ENCODE measurements at regions of chr9 and their contacts with region 1.

Region 1: DNA sequence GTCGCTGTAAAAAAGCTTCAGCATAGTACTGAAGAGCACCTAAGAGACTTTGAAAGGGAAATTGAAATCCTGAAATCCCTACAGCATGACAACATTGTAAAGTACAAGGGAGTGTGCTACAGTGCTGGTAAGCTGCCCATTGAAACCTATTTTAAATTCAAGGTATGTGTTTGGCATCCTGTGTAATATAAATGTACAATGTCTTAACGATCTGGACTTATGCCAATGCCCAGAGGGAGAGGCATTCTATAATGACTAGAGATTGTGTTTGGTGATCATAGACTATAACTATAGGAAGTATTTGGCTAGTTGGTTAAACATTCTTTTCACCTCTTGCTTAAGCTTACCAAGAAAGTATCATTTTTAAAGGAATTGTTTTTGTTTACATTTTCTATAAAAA is 95.7 kb downstream of the INSL6 start:
- DNase-seq: no peak
- ATAC-seq: no peak
- H3K4me3 ChIP-seq: no peak overlapping the region
- H3K4me3 Mint-ChIP-seq: no peak overlapping the region
- H3K27ac ChIP-seq: no peak overlapping the region
- H3K27ac Mint-ChIP-seq: no peak overlapping the region
- H3K4me1 ChIP-seq: no peaks in the 10 kb centered on the region
- H3K4me1 Mint-ChIP-seq: no peaks in the 10 kb centered on the region
- H3K27me3 ChIP-seq: no peaks in the 10 kb centered on the region
- H3K27me3 Mint-ChIP-seq: no peaks in the 10 kb centered on the region

Region 2: DNA sequence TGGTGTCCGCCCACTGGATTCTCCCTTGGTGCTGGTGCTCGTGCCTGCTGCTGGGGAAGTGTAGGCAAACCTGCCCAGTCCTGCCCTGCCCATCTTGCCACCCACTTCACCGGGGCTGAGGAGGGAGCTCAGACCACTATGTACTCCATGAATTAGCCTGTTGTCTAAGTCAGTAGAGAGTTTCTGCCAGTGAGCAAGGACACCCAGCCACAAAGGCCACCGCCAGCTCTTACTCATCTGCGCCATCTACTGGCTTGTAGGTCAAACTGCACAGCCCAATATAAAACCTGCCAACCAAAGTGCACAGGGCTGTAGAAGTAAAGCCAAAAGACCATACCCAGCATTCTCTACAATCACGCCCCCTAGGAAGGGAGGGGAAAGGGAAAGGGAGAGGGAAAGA is 892.2 kb before region 1 on chr9:
- CTCF ChIA-PET with region 1: no interaction called
- POLR2A ChIA-PET with region 1: no interaction called
- intact Hi-C with region 1: no loop called
- DNase-seq: no peak
- ATAC-seq: no peak
- H3K4me3 ChIP-seq: no peak overlapping the region
- H3K4me3 Mint-ChIP-seq: no peak overlapping the region
- H3K27ac ChIP-seq: no peak overlapping the region
- H3K27ac Mint-ChIP-seq: peak overlapping the region in 1 of 9 donors; percentile 20
- H3K4me1 ChIP-seq: no peaks in the 10 kb centered on the region
- H3K4me1 Mint-ChIP-seq: no peaks in the 10 kb centered on the region
- H3K27me3 ChIP-seq: no peaks in the 10 kb centered on the region
- H3K27me3 Mint-ChIP-seq: peaks cover 0 to 18% (median 0%) of the 10 kb centered on the region in 5 donors

Region 3: GRCh38 chr9:4781408-4781807 is 308.3 kb before region 1 on chr9:
- CTCF ChIA-PET with region 1: no interaction called
- POLR2A ChIA-PET with region 1: no interaction called
- intact Hi-C with region 1: no loop called
- DNase-seq: no peak
- ATAC-seq: no peak
- H3K4me3 ChIP-seq: no peak overlapping the region
- H3K4me3 Mint-ChIP-seq: no peak overlapping the region
- H3K27ac ChIP-seq: no peak overlapping the region
- H3K27ac Mint-ChIP-seq: peak overlapping the region in 1 of 9 donors; percentile 41
- H3K4me1 ChIP-seq: no peaks in the 10 kb centered on the region
- H3K4me1 Mint-ChIP-seq: no peaks in the 10 kb centered on the region
- H3K27me3 ChIP-seq: peaks cover 0 to under 1% of the 10 kb centered on the region in 2 donors
- H3K27me3 Mint-ChIP-seq: peaks cover 6 to 14% (median 13%) of the 10 kb centered on the region in 5 donors

Region 4: GRCh38 chr9:5042641-5043277 is 47.0 kb before region 1 on chr9:
- CTCF ChIA-PET with region 1: no interaction called
- POLR2A ChIA-PET with region 1: no interaction called
- intact Hi-C with region 1: loop called in 1 of 2 experiments (anchors 5 kb)
- DNase-seq: peak in 1 of 9 donors; percentile 15
- ATAC-seq: no peak
- H3K4me3 ChIP-seq: no peak overlapping the region
- H3K4me3 Mint-ChIP-seq: peak overlapping the region in 4 of 10 donors; percentile 56 to 76 (median 60)
- H3K27ac ChIP-seq: no peak overlapping the region
- H3K27ac Mint-ChIP-seq: peak overlapping the region in 2 of 9 donors; percentile 46 to 74
- H3K4me1 ChIP-seq: no peaks in the 10 kb centered on the region
- H3K4me1 Mint-ChIP-seq: peaks cover 0 to 18% (median 0%) of the 10 kb centered on the region in 7 donors
- H3K27me3 ChIP-seq: no peaks in the 10 kb centered on the region
- H3K27me3 Mint-ChIP-seq: no peaks in the 10 kb centered on the region